PC-3 (cell line): ENCODE measurements at regions of chr19 and their contacts with region 1.

Region 1: DNA sequence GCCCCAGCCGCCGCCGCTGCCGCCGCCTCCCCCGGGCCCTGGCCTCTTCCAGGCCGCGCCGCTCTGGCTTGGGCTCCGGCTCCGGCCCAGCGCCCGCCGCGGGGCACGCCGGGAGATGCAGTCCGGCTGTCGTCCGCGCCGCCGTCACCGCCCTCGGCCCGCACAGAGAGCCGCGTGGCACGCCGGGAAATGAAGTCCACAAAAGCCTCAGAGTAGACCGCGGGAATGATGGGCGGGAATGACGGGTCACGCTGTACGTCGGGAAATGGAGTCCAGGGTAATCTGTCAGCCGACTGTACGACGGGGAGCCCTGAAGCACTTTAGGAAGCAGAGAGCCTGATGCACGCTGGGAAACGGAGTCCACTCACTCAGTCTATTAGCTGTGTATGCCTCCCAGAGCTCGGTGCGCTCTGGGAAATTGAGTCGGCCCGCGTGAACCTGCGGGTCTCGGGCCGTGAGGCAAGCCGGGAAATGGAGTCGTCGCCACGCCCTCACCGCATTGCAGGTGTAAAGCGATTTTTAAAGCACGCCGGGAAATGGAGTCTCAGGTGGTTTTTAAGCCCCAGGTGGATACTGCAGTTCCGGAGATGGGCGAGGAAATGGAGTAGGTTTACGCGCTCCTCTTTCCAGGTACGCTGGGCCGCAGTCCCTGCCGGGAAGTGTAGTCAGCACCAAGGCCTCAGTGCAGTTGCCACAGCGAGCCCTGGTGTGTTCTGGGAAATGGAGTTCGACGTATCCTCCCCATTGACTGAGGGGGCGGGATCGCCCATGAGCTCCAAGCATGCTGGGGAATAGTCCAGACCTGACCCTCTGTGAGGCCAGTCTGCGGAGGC is at the start of gene GSK3A:
- DNase-seq: peak; percentile 96
- ATAC-seq: peak; percentile 76
- H3K4me3 ChIP-seq: peak within 1 kb of the TSS; percentile 98
- H3K27ac ChIP-seq: peak within 1 kb of the TSS; percentile 69
- H3K4me1 ChIP-seq: peaks cover 4% of the 10 kb centered on the region
- H3K27me3 ChIP-seq: no peaks in the 10 kb centered on the region
- CTCF ChIP-seq: no peak
- total RNA-seq, gene GSK3A: 25.0 and 29.0 TPM in 2 replicates

Region 2: GRCh38 chr19:42113641-42114348 is 128.9 kb before region 1 on chr19:
- CTCF ChIA-PET with region 1: no interaction called
- POLR2A ChIA-PET with region 1: no interaction called
- intact Hi-C with region 1: loop called (anchors 1 kb)
- DNase-seq: peak; percentile 92
- ATAC-seq: peak; percentile 94
- H3K4me3 ChIP-seq: no peak overlapping the region; the same call in 1 of the 2 replicates
- H3K27ac ChIP-seq: peak overlapping the region; percentile 94
- H3K4me1 ChIP-seq: peaks cover 35% of the 10 kb centered on the region
- H3K27me3 ChIP-seq: no peaks in the 10 kb centered on the region
- CTCF ChIP-seq: peak; percentile 45

Region 3: GRCh38 chr19:42184401-42184861 is 58.3 kb before region 1 on chr19:
- CTCF ChIA-PET with region 1: no interaction called
- POLR2A ChIA-PET with region 1: no interaction called
- intact Hi-C with region 1: no loop called
- DNase-seq: peak; percentile 79
- ATAC-seq: peak; percentile 90
- H3K4me3 ChIP-seq: no peak overlapping the region
- H3K27ac ChIP-seq: no peak overlapping the region
- H3K4me1 ChIP-seq: peaks cover 5% of the 10 kb centered on the region; the same call in 1 of the 2 replicates
- H3K27me3 ChIP-seq: peaks cover 7% of the 10 kb centered on the region; the same call in 1 of the 2 replicates
- CTCF ChIP-seq: peak; percentile 86

Region 4: GRCh38 chr19:42217520-42218437 is 24.9 kb before region 1 on chr19 and contains the start of gene DEDD2:
- CTCF ChIA-PET with region 1: no interaction called
- POLR2A ChIA-PET with region 1: interaction called, 4 read pairs
- intact Hi-C with region 1: loop called (anchors 2 kb)
- DNase-seq: peak; percentile 96
- ATAC-seq: peak; percentile 72
- H3K4me3 ChIP-seq: peak within 1 kb of the TSS; percentile 97
- H3K27ac ChIP-seq: peak within 1 kb of the TSS; percentile 87
- H3K4me1 ChIP-seq: peaks cover 27% of the 10 kb centered on the region
- H3K27me3 ChIP-seq: no peaks in the 10 kb centered on the region
- CTCF ChIP-seq: no peak
- total RNA-seq, gene DEDD2: 34.4 and 38.2 TPM in 2 replicates

Region 5: GRCh38 chr19:42440357-42441048 is 197.8 kb after region 1 on chr19:
- CTCF ChIA-PET with region 1: interaction called, 15 read pairs
- POLR2A ChIA-PET with region 1: no interaction called
- intact Hi-C with region 1: no loop called
- DNase-seq: peak; percentile 72
- ATAC-seq: peak; percentile 62
- H3K4me3 ChIP-seq: no peak overlapping the region
- H3K27ac ChIP-seq: peak overlapping the region; percentile 72
- H3K4me1 ChIP-seq: peaks cover 16% of the 10 kb centered on the region
- H3K27me3 ChIP-seq: no peaks in the 10 kb centered on the region
- CTCF ChIP-seq: peak; percentile 93